ENCODE measurements at regions of chr5 and their contacts with region 1.

Region 1: DNA sequence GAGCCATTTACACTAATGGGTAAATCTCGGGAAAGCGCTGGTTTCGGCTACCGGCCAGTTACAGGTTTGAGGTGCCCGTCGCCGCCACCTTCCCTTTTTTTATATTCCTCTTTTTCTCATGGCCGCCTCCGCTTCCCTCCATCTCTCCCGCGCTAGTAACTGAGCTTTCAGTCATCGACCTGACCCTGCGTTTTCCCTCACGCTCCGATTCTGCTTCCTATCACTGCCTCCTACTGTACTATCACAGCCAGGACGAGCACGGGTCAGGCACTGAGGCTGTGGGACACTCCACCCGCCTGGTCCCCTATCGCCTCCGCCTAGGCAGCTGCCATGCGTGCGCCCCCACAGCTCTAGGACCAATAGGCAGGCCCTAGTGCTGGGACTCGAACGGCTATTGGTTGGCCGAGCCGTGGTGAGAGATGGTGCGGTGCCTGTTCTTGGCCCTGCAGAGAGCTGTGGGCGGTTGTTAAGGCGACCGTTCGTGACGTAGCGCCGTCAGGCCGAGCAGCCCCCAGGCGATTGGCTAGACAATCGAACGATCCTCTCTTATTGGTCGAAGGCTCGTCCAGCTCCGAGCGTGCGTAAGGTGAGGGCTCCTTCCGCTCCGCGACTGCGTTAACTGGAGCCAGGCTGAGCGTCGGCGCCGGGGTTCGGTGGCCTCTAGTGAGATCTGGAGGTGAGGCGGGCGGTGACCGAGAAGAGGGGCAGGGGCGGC is at the start of gene HMGCR:
- DNase-seq: peak; percentile 99
- H3K4me3 Mint-ChIP-seq: no peak within 1 kb of the TSS
- H3K27ac Mint-ChIP-seq: no peak within 1 kb of the TSS
- H3K4me1 Mint-ChIP-seq: peaks cover 34% of the 10 kb centered on the region
- H3K27me3 Mint-ChIP-seq: no peaks in the 10 kb centered on the region
- total RNA-seq, gene HMGCR: 99.9 and 112 TPM in 2 replicates

Region 2: GRCh38 chr5:74616236-74617146 is 720.3 kb before region 1 on chr5:
- intact Hi-C with region 1: no loop called
- DNase-seq: no peak
- H3K4me3 Mint-ChIP-seq: no peak overlapping the region
- H3K27ac Mint-ChIP-seq: no peak overlapping the region
- H3K4me1 Mint-ChIP-seq: no peaks in the 10 kb centered on the region
- H3K27me3 Mint-ChIP-seq: peaks cover 27% of the 10 kb centered on the region

Region 3: GRCh38 chr5:74934949-74935751 is 401.6 kb before region 1 on chr5:
- intact Hi-C with region 1: loop called (anchors 5 kb)
- DNase-seq: peak; percentile 79
- H3K4me3 Mint-ChIP-seq: peak overlapping the region; percentile 65
- H3K27ac Mint-ChIP-seq: peak overlapping the region; percentile 70
- H3K4me1 Mint-ChIP-seq: peaks cover 35% of the 10 kb centered on the region
- H3K27me3 Mint-ChIP-seq: peaks cover 4% of the 10 kb centered on the region

Region 4: GRCh38 chr5:75320341-75320740 is 16.4 kb before region 1 on chr5:
- intact Hi-C with region 1: loop called (anchors 1 kb)
- DNase-seq: peak; percentile 44
- H3K4me3 Mint-ChIP-seq: no peak overlapping the region
- H3K27ac Mint-ChIP-seq: no peak overlapping the region
- H3K4me1 Mint-ChIP-seq: peaks cover 18% of the 10 kb centered on the region
- H3K27me3 Mint-ChIP-seq: no peaks in the 10 kb centered on the region

Region 5: DNA sequence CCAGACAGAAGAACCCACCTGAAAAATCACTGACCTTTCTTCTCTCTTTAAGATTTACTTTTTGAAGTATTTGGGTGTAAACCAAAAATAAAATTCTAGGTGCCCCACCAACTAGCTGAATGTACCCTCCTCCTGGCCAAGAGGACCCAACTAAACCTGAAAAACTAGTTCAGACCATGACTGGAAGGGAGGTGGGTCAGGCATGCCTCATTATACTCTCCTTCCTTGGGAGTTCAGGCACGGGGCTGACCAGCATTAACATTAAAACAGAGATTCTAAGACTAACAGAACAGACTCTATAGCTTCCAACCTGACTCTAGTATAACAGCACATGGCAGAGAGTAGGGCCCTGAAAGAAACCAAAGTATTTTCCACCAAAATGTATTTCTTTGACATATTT is 113.3 kb after region 1 on chr5:
- intact Hi-C with region 1: no loop called
- DNase-seq: no peak
- H3K4me3 Mint-ChIP-seq: no peak overlapping the region
- H3K27ac Mint-ChIP-seq: no peak overlapping the region
- H3K4me1 Mint-ChIP-seq: no peaks in the 10 kb centered on the region
- H3K27me3 Mint-ChIP-seq: no peaks in the 10 kb centered on the region

Region 6: GRCh38 chr5:75511435-75512384 is 174.9 kb after region 1 on chr5 and contains the starts of genes CERT1 and POLK:
- intact Hi-C with region 1: loop called (anchors 2 kb)
- DNase-seq: peak; percentile 99
- H3K4me3 Mint-ChIP-seq: peak within 1 kb of the TSS; percentile 95
- H3K27ac Mint-ChIP-seq: peak within 1 kb of the TSS; percentile 96
- H3K4me1 Mint-ChIP-seq: peaks cover 40% of the 10 kb centered on the region
- H3K27me3 Mint-ChIP-seq: no peaks in the 10 kb centered on the region
- total RNA-seq, gene CERT1: 46.4 and 49.2 TPM in 2 replicates
- total RNA-seq, gene POLK: 40.4 and 41.6 TPM in 2 replicates

Region 7: GRCh38 chr5:75668977-75669689 is 332.4 kb after region 1 on chr5:
- intact Hi-C with region 1: loop called (anchors 2 kb)
- DNase-seq: peak; percentile 83
- H3K4me3 Mint-ChIP-seq: peak overlapping the region; percentile 79
- H3K27ac Mint-ChIP-seq: peak overlapping the region; percentile 95
- H3K4me1 Mint-ChIP-seq: peaks cover 36% of the 10 kb centered on the region
- H3K27me3 Mint-ChIP-seq: no peaks in the 10 kb centered on the region

Region 8: GRCh38 chr5:75717082-75717922 is 380.5 kb after region 1 on chr5 and contains the start of gene POC5:
- intact Hi-C with region 1: loop called (anchors 1 kb)
- DNase-seq: peak; percentile 99
- H3K4me3 Mint-ChIP-seq: peak within 1 kb of the TSS; percentile 100
- H3K27ac Mint-ChIP-seq: peak within 1 kb of the TSS; percentile 100
- H3K4me1 Mint-ChIP-seq: peaks cover 29% of the 10 kb centered on the region
- H3K27me3 Mint-ChIP-seq: peaks cover 7% of the 10 kb centered on the region
- total RNA-seq, gene POC5: 20.8 and 21.3 TPM in 2 replicates